Mammary epithelial cell (primary cell): ENCODE measurements at regions of chr17 and their contacts with region 1.

Region 1: GRCh38 chr17:78401246-78401645 is 22.8 kb downstream of the PGS1 start:
- DNase-seq: peak; percentile 85
- H3K4me3 ChIP-seq: no peak overlapping the region
- H3K27ac ChIP-seq: peak overlapping the region; percentile 50
- H3K4me1 ChIP-seq: peaks cover 58% of the 10 kb centered on the region
- H3K27me3 ChIP-seq: no peaks in the 10 kb centered on the region
- CTCF ChIP-seq: peak in 1 of 2 donors; percentile 14

Region 2: GRCh38 chr17:78378225-78379130 is 22.8 kb before region 1 on chr17 and contains the start of gene PGS1:
- CTCF ChIA-PET with region 1: interaction called, 6 read pairs
- dilution Hi-C with region 1: no loop called
- in situ Hi-C with region 1: no loop called
- intact Hi-C with region 1: loop called (anchors 1 kb)
- DNase-seq: peak; percentile 72
- H3K4me3 ChIP-seq: peak within 1 kb of the TSS; percentile 77 to 90 (median 89)
- H3K27ac ChIP-seq: peak within 1 kb of the TSS; percentile 92
- H3K4me1 ChIP-seq: peaks cover 43% of the 10 kb centered on the region
- H3K27me3 ChIP-seq: no peaks in the 10 kb centered on the region
- CTCF ChIP-seq: no peak
- total RNA-seq, gene PGS1: 29.1 to 31.5 TPM

Region 3: DNA sequence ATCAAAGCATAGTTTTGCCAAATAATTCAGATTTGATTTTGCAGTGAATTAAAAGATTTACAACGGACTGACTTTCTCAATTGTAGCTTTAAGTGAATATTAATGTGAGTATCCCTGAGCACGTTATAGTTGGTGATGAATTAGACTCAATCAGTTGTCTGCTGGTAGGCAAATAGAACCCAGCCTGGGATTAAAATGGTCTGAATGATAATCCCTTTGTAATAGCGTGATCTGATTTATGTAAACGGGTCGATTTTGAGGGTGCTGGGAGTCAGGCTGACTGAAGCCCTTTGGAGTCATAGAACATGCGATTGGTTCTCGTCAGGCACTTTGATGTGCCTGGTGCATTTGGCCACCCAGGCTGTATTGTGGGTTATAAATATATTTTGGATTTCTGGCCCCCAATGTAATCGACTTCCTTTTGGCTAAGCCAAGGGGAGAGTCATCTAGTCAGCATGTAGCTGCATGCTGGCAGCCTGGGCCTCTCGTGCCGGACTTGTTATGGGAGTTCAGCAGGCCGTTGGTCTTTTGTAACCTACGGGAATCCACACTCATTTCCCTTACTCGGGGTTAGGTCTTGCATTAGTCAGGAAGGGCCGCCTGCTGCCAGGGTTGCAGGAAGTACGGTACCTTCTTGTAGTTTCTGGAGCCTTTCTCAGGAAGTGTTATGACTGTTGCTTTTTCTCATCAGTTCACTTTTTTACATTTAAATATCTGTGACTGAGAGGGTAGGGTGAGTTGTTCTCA is 17.3 kb before region 1 on chr17:
- CTCF ChIA-PET with region 1: no interaction called
- dilution Hi-C with region 1: no loop called
- in situ Hi-C with region 1: no loop called
- intact Hi-C with region 1: loop called (anchors 1 kb)
- DNase-seq: peak; percentile 97
- H3K4me3 ChIP-seq: no peak overlapping the region
- H3K27ac ChIP-seq: peak overlapping the region; percentile 51
- H3K4me1 ChIP-seq: peaks cover 31% of the 10 kb centered on the region
- H3K27me3 ChIP-seq: no peaks in the 10 kb centered on the region
- CTCF ChIP-seq: no peak